Dendritic cell treated with granulocyte-macrophage colony-stimulating factor and Interleukin-4, amounts not matched to agents 40 ng/mL and 50 ng/mL, for 4 days (primary cell): ENCODE measurements at regions of chr9 and their contacts with region 1.

Region 1: DNA sequence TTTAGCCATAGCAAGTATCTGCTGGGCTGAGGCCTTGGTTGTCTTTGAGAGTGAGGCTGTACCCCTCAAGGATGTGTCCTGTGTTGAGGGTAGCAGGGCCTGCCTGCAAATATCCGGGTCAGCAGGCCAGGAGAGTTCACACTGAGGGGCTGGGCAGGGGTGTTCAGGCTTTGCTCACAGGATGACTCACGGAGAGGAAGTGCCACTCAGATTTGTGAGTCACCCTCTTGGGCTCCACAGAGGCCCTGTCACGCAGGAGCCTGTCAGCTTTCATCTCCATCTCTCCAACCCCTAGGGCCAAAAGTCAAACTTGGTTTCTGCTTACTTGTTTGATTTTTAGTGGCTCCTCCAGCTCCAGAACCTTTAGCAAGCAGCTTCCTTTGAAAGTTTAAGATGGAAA is 211.5 kb downstream of the SEC61B start:
- H3K4me3 Mint-ChIP-seq: no peak overlapping the region
- H3K27ac Mint-ChIP-seq: peak overlapping the region; percentile 83
- H3K4me1 Mint-ChIP-seq: peaks cover 47% of the 10 kb centered on the region
- H3K27me3 Mint-ChIP-seq: no peaks in the 10 kb centered on the region

Region 2: DNA sequence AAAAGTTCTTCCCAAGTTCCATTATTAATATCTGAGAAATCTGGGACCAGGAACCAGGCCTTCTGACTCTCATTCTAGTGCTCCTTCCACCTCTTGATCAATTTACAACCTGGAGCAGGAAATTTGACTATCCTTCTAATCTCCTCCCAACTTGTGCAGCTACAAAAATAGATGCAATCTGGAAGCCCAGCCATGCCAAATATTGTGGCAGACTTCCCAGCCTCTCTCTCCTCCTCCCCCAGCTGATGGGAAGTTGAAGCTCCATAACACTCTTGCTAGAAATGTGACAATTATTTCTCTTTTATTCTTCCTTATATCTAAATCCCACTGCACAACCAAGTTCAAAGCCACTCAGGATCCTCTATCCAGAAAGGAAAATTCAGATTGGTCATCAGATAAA is 40.6 kb after region 1 on chr9:
- intact Hi-C with region 1: loop called (anchors 5 kb)
- H3K4me3 Mint-ChIP-seq: no peak overlapping the region
- H3K27ac Mint-ChIP-seq: no peak overlapping the region
- H3K4me1 Mint-ChIP-seq: peaks cover 42% of the 10 kb centered on the region
- H3K27me3 Mint-ChIP-seq: no peaks in the 10 kb centered on the region

Region 3: GRCh38 chr9:99513441-99514112 is 80.0 kb after region 1 on chr9:
- intact Hi-C with region 1: loop called (anchors 10 kb)
- H3K4me3 Mint-ChIP-seq: no peak overlapping the region
- H3K27ac Mint-ChIP-seq: peak overlapping the region; percentile 81
- H3K4me1 Mint-ChIP-seq: peaks cover 50% of the 10 kb centered on the region
- H3K27me3 Mint-ChIP-seq: no peaks in the 10 kb centered on the region

Region 4: DNA sequence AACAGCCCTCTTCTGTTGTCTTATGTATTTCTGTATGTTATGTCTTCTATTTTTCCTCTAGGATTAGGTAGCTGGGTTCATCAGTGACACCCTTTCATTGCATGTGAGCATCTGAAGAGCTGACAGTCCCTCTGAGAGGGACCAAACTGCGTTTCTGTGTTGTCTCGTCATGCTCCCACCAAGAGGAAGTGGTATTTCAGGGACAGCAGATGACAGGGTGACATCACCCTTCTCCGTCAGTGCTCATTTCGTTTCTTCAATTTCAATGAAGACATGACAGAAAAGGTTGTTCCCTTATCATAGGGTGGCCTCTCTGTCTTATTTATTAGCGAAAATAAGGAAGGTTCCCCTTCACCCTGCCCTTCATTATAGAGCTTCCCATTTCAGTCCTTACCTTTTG is 162.2 kb after region 1 on chr9:
- intact Hi-C with region 1: loop called (anchors 10 kb)
- H3K4me3 Mint-ChIP-seq: no peak overlapping the region
- H3K27ac Mint-ChIP-seq: peak overlapping the region; percentile 82
- H3K4me1 Mint-ChIP-seq: peaks cover 42% of the 10 kb centered on the region
- H3K27me3 Mint-ChIP-seq: no peaks in the 10 kb centered on the region